Uterus (tissue), 4 donors: ENCODE measurements at regions of chr18 and their contacts with region 1.

Region 1: GRCh38 chr18:11937874-11938478 is 29.9 kb upstream of the MPPE1 start:
- DNase-seq: peak; percentile 73 to 78
- H3K4me3 ChIP-seq: no peak overlapping the region
- H3K27ac ChIP-seq: no peak overlapping the region
- H3K4me1 ChIP-seq: no peaks in the 10 kb centered on the region
- H3K27me3 ChIP-seq: no peaks in the 10 kb centered on the region
- CTCF ChIP-seq: peak; percentile 84 to 87 (median 86)
- POLR2A ChIP-seq: no peak

Region 2: GRCh38 chr18:11591957-11592356 is 346.0 kb before region 1 on chr18:
- intact Hi-C with region 1: no loop called
- DNase-seq: no peak
- H3K4me3 ChIP-seq: no peak overlapping the region
- H3K27ac ChIP-seq: no peak overlapping the region
- H3K4me1 ChIP-seq: no peaks in the 10 kb centered on the region
- H3K27me3 ChIP-seq: no peaks in the 10 kb centered on the region
- CTCF ChIP-seq: no peak
- POLR2A ChIP-seq: no peak

Region 3: DNA sequence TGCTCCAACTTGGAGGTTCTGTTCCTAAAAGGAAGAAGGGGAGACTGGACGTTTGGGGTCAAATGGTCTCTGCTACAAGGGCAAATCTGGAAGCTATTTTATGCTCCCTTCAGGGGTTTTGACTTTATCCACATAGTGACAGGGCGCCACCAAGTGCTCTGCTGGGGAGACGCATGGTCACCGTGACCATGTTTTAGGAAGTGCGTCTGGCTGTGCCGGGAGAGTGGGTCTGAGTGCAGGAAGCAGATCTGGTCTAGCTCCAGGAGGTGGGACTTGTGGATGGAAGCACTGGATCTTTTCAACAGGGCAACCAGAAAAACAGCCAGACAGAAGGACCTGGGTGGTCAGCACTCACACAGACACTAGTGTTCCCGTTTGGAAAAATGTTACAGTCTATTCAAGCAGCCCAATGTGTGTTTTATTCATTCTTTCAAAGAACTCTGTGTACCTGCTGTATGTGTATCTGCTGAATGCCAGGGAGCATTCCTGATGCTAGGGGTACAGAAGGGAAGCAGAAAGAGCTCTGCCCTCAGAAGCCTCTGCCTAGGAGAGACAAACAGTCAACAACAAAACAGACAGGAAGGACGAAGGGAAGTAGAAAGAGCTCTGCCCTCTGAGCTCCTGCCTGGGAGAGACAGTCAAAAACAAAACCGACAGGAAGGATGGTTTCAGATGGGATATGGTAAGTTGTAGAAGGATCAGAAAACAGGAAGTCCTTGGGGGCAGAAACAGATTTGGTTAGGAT is 57.6 kb after region 1 on chr18:
- intact Hi-C with region 1: loop called (anchors 1 kb)
- DNase-seq: peak; percentile 68 to 74
- H3K4me3 ChIP-seq: no peak overlapping the region
- H3K27ac ChIP-seq: peak overlapping the region in 1 of 2 donors; percentile 10
- H3K4me1 ChIP-seq: no peaks in the 10 kb centered on the region
- H3K27me3 ChIP-seq: no peaks in the 10 kb centered on the region
- CTCF ChIP-seq: peak; percentile 65 to 79 (median 76)
- POLR2A ChIP-seq: no peak

Region 4: DNA sequence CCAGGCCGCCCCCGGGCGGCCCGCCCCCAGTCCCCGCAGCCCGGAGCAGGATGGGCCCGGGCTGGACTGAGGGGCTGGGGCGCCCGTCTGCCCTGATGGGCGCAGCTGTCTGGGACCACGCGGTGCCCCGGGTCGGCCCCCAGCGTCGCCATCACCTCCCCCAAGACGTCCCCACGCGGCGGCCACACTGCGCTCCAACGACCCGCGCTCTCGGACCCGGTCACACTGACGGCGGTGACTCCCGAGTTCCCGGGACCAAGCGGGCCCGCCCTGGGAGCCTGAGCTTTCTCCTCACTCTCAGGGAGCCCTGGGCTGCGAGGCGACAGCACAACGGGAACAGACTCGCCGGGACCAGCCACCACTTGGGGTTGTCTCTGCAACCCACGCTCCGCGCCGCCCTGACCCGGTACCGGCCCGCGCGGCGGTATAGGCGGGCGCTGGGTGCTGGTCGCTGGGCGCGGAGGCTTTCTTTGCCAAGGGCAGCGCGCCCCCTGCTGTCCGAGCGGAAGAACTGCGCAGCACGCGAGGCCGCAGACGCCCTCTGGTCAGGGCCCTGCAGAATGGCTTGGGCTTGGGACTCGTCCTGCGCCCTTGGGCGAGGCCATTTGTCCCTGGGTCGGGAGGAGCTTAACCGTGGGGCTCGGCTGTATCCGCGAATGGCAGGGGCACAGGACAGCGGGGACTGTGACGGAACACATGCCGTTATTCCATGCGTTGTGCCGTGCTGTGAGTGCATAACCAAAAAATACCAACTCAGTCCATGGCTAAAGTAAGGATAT is 100.9 kb after region 1 on chr18:
- intact Hi-C with region 1: loop called (anchors 5 kb)
- DNase-seq: peak; percentile 73 to 84
- H3K4me3 ChIP-seq: peak overlapping the region; percentile 40 to 51
- H3K27ac ChIP-seq: peak overlapping the region in 1 of 2 donors; percentile 9
- H3K4me1 ChIP-seq: no peaks in the 10 kb centered on the region
- H3K27me3 ChIP-seq: no peaks in the 10 kb centered on the region
- CTCF ChIP-seq: peak; percentile 96 to 99 (median 99)
- POLR2A ChIP-seq: no peak